Caco-2 (cell line): ENCODE measurements at regions of chr4 and their contacts with region 1.

Region 1: GRCh38 chr4:9691238-9692065 is 90.0 kb upstream of the DRD5 start:
- DNase-seq: peak; percentile 96
- H3K4me3 ChIP-seq: peak overlapping the region; percentile 37
- H3K4me3 Mint-ChIP-seq: peak overlapping the region; percentile 73
- H3K27ac Mint-ChIP-seq: peak overlapping the region; percentile 68
- H3K4me1 ChIP-seq: no peaks in the 10 kb centered on the region
- H3K4me1 Mint-ChIP-seq: peaks cover 6% of the 10 kb centered on the region
- H3K27me3 ChIP-seq: no peaks in the 10 kb centered on the region
- H3K27me3 Mint-ChIP-seq: no peaks in the 10 kb centered on the region
- CTCF ChIP-seq: no peak

Region 2: DNA sequence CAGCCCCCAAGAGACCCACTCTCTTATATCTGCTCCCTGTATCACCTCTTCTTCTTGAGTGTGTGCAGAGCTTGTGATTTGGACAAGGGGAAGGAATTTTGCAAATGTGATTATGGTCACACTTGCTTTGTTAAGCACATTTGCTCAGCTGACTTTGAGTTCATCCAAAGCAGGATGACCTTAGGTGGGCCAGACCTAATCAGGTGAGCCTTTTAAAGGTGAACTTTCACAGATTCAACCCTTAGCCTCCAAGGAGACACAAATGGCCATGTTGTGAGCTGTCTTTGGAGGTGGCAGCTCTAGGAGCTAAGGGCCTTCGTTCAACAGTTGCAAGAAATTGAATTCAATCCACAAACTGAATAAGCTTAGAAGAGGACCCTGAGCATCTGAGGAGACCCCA is 99.4 kb before region 1 on chr4:
- CTCF ChIA-PET with region 1: no interaction called
- POLR2A ChIA-PET with region 1: no interaction called
- intact Hi-C with region 1: no loop called
- DNase-seq: no peak
- H3K4me3 ChIP-seq: no peak overlapping the region
- H3K4me3 Mint-ChIP-seq: no peak overlapping the region
- H3K27ac Mint-ChIP-seq: no peak overlapping the region
- H3K4me1 ChIP-seq: no peaks in the 10 kb centered on the region
- H3K4me1 Mint-ChIP-seq: peaks cover 7% of the 10 kb centered on the region
- H3K27me3 ChIP-seq: no peaks in the 10 kb centered on the region
- H3K27me3 Mint-ChIP-seq: no peaks in the 10 kb centered on the region
- CTCF ChIP-seq: no peak

Region 3: GRCh38 chr4:9792381-9792780 is 100.9 kb after region 1 on chr4:
- CTCF ChIA-PET with region 1: no interaction called
- POLR2A ChIA-PET with region 1: no interaction called
- intact Hi-C with region 1: no loop called
- DNase-seq: no peak
- H3K4me3 ChIP-seq: no peak overlapping the region
- H3K4me3 Mint-ChIP-seq: no peak overlapping the region
- H3K27ac Mint-ChIP-seq: no peak overlapping the region
- H3K4me1 ChIP-seq: no peaks in the 10 kb centered on the region
- H3K4me1 Mint-ChIP-seq: no peaks in the 10 kb centered on the region
- H3K27me3 ChIP-seq: no peaks in the 10 kb centered on the region
- H3K27me3 Mint-ChIP-seq: peaks cover 4% of the 10 kb centered on the region
- CTCF ChIP-seq: no peak

Region 4: DNA sequence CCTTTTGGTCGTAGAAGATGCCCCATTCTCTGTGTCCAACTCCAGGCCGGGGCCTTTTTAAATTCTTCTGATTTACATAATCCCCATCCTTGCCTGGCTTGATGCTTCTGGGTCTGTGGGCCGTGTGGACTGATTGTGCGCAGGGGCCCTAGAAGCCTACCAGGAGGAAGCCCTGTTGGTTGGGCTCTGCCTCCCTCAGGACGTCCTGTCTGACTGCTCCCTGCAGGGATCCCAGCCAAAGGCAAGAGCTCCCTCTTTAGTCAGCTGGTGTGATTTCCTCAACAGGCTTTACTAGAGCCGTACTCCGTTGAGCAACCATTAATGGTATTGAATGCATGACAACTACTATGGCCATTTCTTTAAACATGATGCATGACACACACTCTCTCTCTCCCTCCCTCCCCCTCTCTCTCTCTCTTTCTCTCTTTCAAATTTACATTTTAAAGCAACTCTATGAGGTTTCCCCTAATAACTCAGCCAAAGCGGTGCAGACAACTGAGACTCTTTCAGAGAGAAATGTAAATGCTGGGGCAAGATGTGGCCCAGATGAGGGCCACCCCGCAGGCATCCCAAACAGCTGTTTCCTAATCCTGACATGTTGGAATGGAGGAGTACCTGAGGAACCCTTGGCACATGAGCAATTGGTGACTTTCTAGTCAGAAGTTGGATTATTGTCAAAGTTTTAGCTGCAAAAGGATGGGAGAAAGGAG is 207.3 kb after region 1 on chr4:
- CTCF ChIA-PET with region 1: interaction called, 5 read pairs
- POLR2A ChIA-PET with region 1: no interaction called
- intact Hi-C with region 1: loop called (anchors 10 kb)
- DNase-seq: peak; percentile 57 to 58
- H3K4me3 ChIP-seq: no peak overlapping the region
- H3K4me3 Mint-ChIP-seq: no peak overlapping the region
- H3K27ac Mint-ChIP-seq: no peak overlapping the region
- H3K4me1 ChIP-seq: no peaks in the 10 kb centered on the region
- H3K4me1 Mint-ChIP-seq: no peaks in the 10 kb centered on the region
- H3K27me3 ChIP-seq: no peaks in the 10 kb centered on the region
- H3K27me3 Mint-ChIP-seq: no peaks in the 10 kb centered on the region
- CTCF ChIP-seq: peak; percentile 22 to 49